CD4-positive, alpha-beta T cell (primary cell): ENCODE measurements at regions of chr5 and their contacts with region 1.

Region 1: DNA sequence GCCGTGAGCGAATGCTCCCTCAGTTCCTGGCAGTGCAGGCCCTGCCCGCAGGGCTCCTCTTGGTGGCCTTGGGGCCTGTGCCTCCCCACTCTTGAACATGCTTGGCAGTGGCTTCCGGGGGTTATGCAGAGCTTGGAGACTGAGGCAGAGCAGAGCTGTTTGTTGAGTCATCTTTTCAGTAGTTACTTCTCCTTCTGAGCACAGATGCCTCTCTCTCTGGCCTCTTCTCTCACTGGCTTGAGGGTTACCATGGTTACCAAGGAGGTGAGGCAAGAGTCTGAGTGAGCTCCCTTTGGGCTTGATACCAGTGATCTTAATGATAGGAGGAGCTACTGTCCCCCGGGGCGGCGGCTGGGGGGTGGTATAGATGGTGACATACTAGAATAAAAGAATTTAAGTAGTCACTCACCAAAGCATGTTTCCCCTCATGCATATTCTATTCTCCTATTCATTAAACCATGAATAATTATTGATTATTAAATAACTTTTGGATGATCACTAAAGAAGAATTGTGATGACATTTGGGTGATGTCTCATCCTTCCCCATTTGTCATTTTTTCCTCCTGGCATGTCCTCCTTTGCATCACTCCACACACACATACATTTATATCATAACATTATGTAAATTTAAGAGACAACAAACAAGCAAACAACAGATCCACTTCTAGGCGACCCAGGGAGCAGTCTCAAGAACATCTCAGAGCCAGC is 111.1 kb downstream of the ARHGAP26 start:
- DNase-seq: peak in 3 of 14 experiments; percentile 20 to 71 (median 59)
- ATAC-seq: no peak
- H3K4me3 ChIP-seq: no peak overlapping the region
- H3K4me3 Mint-ChIP-seq: no peak overlapping the region
- H3K27ac ChIP-seq: no peak overlapping the region
- H3K27ac Mint-ChIP-seq: no peak overlapping the region
- H3K4me1 ChIP-seq: no peaks in the 10 kb centered on the region
- H3K4me1 Mint-ChIP-seq: no peaks in the 10 kb centered on the region
- H3K27me3 ChIP-seq: no peaks in the 10 kb centered on the region
- H3K27me3 Mint-ChIP-seq: no peaks in the 10 kb centered on the region
- CTCF ChIP-seq: no peak

Region 2: DNA sequence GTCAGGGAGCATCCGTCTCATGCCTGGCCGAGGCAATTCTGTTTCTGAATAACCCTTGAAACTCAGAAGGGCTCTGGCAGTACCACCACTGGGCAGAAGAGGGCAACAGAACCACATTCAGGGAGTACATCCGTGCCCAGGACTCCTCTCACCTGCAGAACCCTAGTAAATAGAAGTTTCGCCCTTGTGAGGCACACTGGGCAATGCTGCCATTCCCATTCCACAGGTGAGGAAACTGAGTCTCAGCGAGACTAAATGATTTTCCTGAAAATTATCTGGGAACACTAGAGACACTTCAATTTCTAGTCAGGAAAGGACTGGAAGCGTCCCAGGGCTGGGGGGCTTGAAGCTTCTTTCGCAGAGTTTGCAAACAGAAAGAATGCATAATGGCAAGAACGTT is 270.1 kb before region 1 on chr5:
- CTCF ChIA-PET with region 1: no interaction called
- POLR2A ChIA-PET with region 1: no interaction called
- intact Hi-C with region 1: loop called (anchors 1 to 5 kb)
- DNase-seq: peak; percentile 34 to 70 (median 56)
- ATAC-seq: peak; percentile 94
- H3K4me3 ChIP-seq: no peak overlapping the region
- H3K4me3 Mint-ChIP-seq: no peak overlapping the region
- H3K27ac ChIP-seq: no peak overlapping the region
- H3K27ac Mint-ChIP-seq: no peak overlapping the region
- H3K4me1 ChIP-seq: no peaks in the 10 kb centered on the region
- H3K4me1 Mint-ChIP-seq: no peaks in the 10 kb centered on the region
- H3K27me3 ChIP-seq: peaks cover 0 to 3% of the 10 kb centered on the region in 2 experiments
- H3K27me3 Mint-ChIP-seq: peaks cover 34% of the 10 kb centered on the region
- CTCF ChIP-seq: peak; percentile 77

Region 3: GRCh38 chr5:142655339-142656267 is 225.6 kb before region 1 on chr5:
- CTCF ChIA-PET with region 1: no interaction called
- POLR2A ChIA-PET with region 1: no interaction called
- intact Hi-C with region 1: loop called (anchors 1 to 2 kb)
- DNase-seq: peak; percentile 43 to 78 (median 60)
- ATAC-seq: peak; percentile 87
- H3K4me3 ChIP-seq: no peak overlapping the region
- H3K4me3 Mint-ChIP-seq: no peak overlapping the region
- H3K27ac ChIP-seq: no peak overlapping the region
- H3K27ac Mint-ChIP-seq: no peak overlapping the region
- H3K4me1 ChIP-seq: no peaks in the 10 kb centered on the region
- H3K4me1 Mint-ChIP-seq: peaks cover 8% of the 10 kb centered on the region
- H3K27me3 ChIP-seq: peaks cover 3 to 6% of the 10 kb centered on the region in 2 experiments
- H3K27me3 Mint-ChIP-seq: peaks cover 16% of the 10 kb centered on the region
- CTCF ChIP-seq: peak; percentile 93

Region 4: DNA sequence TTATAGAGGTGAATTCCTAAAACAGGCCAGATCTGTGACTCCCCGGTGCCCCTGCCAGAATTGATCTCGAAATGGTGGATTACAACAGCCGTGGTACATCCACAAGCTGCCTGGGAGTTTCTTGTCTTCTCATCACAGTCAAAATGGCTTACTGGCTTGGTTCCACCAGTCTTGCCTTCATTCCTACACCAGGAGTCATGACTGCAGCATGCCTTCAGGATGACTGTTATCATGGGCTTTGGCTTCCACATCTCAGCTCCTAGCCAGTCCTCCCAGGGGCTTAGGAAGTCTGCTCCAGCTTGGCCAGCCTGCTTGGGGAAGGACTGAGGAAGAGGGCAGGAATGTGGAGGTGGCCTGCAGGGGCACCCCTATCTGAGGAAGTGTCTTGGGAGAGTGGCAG is 655.1 kb after region 1 on chr5:
- CTCF ChIA-PET with region 1: no interaction called
- POLR2A ChIA-PET with region 1: no interaction called
- intact Hi-C with region 1: no loop called
- DNase-seq: no peak
- ATAC-seq: no peak
- H3K4me3 ChIP-seq: no peak overlapping the region
- H3K4me3 Mint-ChIP-seq: no peak overlapping the region
- H3K27ac ChIP-seq: no peak overlapping the region
- H3K27ac Mint-ChIP-seq: no peak overlapping the region
- H3K4me1 ChIP-seq: no peaks in the 10 kb centered on the region
- H3K4me1 Mint-ChIP-seq: no peaks in the 10 kb centered on the region
- H3K27me3 ChIP-seq: no peaks in the 10 kb centered on the region
- H3K27me3 Mint-ChIP-seq: no peaks in the 10 kb centered on the region
- CTCF ChIP-seq: no peak